Mucosa of descending colon (tissue), 3 donors: ENCODE measurements at regions of chr5 and their contacts with region 1.

Region 1: GRCh38 chr5:142888469-142889085 is 118.4 kb downstream of the ARHGAP26 start:
- DNase-seq: no peak
- ATAC-seq: peak; percentile 80
- H3K4me3 ChIP-seq: no peak overlapping the region
- H3K4me1 ChIP-seq: no peaks in the 10 kb centered on the region
- CTCF ChIP-seq: peak; percentile 43

Region 2: GRCh38 chr5:142713121-142713706 is 175.4 kb before region 1 on chr5:
- intact Hi-C with region 1: loop called in 1 of 2 experiments (anchors 10 kb)
- DNase-seq: peak; percentile 87 to 95 (median 92)
- ATAC-seq: peak; percentile 97
- H3K4me3 ChIP-seq: no peak overlapping the region
- H3K4me1 ChIP-seq: no peaks in the 10 kb centered on the region
- CTCF ChIP-seq: peak; percentile 90

Region 3: GRCh38 chr5:142753116-142753631 is 135.4 kb before region 1 on chr5:
- intact Hi-C with region 1: loop called in 1 of 2 experiments (anchors 10 kb)
- DNase-seq: no peak
- ATAC-seq: no peak
- H3K4me3 ChIP-seq: no peak overlapping the region
- H3K4me1 ChIP-seq: no peaks in the 10 kb centered on the region
- CTCF ChIP-seq: no peak

Region 4: DNA sequence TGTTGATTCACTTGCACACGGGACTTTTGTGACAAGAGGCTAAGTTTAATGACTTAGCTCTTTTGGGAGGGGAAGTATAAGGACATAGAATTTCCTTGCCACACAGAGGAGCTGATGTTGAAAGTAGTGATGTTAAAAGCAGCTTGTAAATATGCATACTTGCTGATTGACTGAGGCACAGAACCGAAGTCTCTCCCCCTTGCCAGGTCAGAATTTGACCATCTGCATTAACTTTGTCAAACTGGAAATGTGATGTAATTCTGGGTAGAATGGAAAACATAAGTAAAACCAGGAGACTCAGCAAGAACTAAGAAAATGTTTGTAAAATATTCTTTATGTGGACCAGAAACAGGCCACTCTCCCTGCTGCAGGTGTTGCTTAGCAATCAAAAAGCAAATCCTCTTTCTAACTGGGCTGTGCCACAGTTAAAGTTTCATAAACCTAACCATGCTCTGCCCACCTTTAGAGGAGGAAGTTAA is 230.8 kb after region 1 on chr5:
- intact Hi-C with region 1: no loop called
- DNase-seq: no peak
- ATAC-seq: peak; percentile 56
- H3K4me3 ChIP-seq: no peak overlapping the region
- H3K4me1 ChIP-seq: peaks cover 12% of the 10 kb centered on the region
- CTCF ChIP-seq: no peak